ENCODE measurements at regions of chr16 and their contacts with region 1.

Region 1: GRCh38 chr16:27179500-27180072 is 23.7 kb upstream of the KDM8 start:
- DNase-seq: peak; percentile 87
- ATAC-seq: peak; percentile 100
- H3K4me3 ChIP-seq: no peak overlapping the region
- H3K4me3 Mint-ChIP-seq: no peak overlapping the region
- H3K27ac ChIP-seq: no peak overlapping the region
- H3K27ac Mint-ChIP-seq: peak overlapping the region; percentile 10
- H3K4me1 ChIP-seq: peaks cover 16 to 26% of the 10 kb centered on the region in 2 donors
- H3K4me1 Mint-ChIP-seq: peaks cover 17% of the 10 kb centered on the region
- H3K27me3 ChIP-seq: no peaks in the 10 kb centered on the region
- H3K27me3 Mint-ChIP-seq: no peaks in the 10 kb centered on the region
- CTCF ChIP-seq: peak; percentile 84

Region 2: DNA sequence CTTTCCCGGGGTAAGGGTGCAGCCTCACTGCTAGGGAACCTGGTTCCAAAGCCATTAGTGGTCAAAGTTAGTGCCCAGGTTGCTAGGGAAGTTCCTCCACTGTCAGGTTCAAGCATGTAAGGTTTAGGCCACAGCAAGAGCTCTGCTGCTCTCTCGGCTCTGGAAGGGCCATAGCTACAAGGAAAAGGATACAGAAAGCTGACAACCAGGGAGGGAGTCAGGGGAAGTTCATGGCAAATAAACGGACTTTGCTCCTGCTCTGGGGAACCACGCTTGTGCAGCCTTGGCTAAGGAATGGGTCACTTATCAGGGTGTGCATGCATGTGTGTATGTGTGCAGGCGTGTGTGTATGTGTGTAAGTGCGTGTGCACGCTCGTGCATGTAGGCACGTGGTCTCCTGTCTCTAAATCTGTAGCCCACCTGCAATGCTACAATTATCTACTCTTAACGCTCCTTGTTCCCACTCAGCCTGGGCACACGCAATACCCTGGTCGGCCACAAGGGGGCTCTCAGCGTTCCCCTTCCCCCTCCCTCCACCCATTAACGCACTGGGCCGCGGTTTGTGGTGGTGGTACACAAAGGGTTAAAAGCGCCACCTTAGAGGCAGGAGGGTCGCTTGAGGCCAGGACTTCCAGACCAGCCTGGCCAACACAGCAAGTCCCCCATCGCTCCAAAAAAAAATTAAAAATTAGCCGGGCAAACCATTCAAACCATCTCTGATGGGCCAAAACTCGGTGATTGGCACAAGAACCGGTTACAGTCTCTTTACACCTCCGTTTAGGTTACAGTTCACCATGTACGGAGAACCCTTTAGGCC is 24.7 kb before region 1 on chr16:
- CTCF ChIA-PET with region 1: interaction called, 31 read pairs
- POLR2A ChIA-PET with region 1: no interaction called
- intact Hi-C with region 1: no loop called
- DNase-seq: peak; percentile 75
- ATAC-seq: peak; percentile 91
- H3K4me3 ChIP-seq: no peak overlapping the region
- H3K4me3 Mint-ChIP-seq: no peak overlapping the region
- H3K27ac ChIP-seq: no peak overlapping the region
- H3K27ac Mint-ChIP-seq: no peak overlapping the region
- H3K4me1 ChIP-seq: peaks cover 9 to 11% of the 10 kb centered on the region in 2 donors
- H3K4me1 Mint-ChIP-seq: peaks cover 13% of the 10 kb centered on the region
- H3K27me3 ChIP-seq: no peaks in the 10 kb centered on the region
- H3K27me3 Mint-ChIP-seq: no peaks in the 10 kb centered on the region
- CTCF ChIP-seq: peak; percentile 99

Region 3: DNA sequence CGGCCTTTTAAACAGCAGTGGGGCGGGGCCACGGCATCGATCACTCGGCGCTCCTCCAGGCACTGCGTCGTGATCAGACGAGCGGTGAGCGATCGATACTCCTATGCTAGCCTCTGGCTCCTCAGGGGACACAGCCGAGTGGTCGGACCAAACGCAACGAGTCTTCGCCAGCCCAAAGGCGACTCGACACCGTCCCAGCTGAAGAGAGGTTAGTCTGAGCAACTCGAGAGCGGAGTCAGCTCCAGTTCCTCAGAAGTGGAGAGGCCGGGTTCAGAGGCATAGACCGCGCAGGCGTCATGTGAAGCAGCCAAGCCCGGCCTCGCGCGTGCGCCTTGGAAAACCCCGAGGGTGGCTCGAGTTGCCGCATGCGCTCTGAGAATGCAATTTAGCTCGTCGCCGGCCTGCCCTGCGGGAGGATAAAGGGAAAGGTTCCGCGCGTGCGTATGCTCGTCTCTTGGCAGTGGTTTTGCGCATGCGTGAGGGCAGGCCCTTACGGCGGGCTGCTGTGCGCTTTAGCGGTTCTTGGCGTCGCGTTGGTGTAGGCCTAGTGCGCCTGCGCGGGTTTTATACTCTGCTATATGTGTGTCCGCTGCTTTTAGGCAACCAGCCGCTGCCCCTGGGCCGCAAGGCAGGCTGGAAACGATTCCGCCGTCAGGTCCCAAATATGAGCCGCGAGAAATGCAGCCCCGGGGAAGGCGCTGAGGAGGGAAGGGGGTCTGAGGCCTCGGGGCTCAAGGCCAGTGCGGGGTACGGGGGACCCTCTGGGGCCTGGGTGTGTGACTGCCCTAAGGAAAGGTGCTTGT is 24.0 kb after region 1 on chr16 and contains the start of gene KDM8:
- CTCF ChIA-PET with region 1: interaction called, 47 read pairs
- POLR2A ChIA-PET with region 1: interaction called, 4 read pairs
- intact Hi-C with region 1: no loop called
- DNase-seq: peak; percentile 100
- ATAC-seq: peak; percentile 76
- H3K4me3 ChIP-seq: peak within 1 kb of the TSS; percentile 69 to 95 (median 92)
- H3K4me3 Mint-ChIP-seq: peak within 1 kb of the TSS; percentile 97
- H3K27ac ChIP-seq: peak within 1 kb of the TSS; percentile 93 to 94
- H3K27ac Mint-ChIP-seq: peak within 1 kb of the TSS; percentile 100
- H3K4me1 ChIP-seq: peaks cover 50 to 62% of the 10 kb centered on the region in 2 donors
- H3K4me1 Mint-ChIP-seq: peaks cover 67% of the 10 kb centered on the region
- H3K27me3 ChIP-seq: no peaks in the 10 kb centered on the region
- H3K27me3 Mint-ChIP-seq: no peaks in the 10 kb centered on the region
- CTCF ChIP-seq: no peak
- total RNA-seq, gene KDM8: 37.4 and 39.8 TPM in 2 replicates

Region 4: DNA sequence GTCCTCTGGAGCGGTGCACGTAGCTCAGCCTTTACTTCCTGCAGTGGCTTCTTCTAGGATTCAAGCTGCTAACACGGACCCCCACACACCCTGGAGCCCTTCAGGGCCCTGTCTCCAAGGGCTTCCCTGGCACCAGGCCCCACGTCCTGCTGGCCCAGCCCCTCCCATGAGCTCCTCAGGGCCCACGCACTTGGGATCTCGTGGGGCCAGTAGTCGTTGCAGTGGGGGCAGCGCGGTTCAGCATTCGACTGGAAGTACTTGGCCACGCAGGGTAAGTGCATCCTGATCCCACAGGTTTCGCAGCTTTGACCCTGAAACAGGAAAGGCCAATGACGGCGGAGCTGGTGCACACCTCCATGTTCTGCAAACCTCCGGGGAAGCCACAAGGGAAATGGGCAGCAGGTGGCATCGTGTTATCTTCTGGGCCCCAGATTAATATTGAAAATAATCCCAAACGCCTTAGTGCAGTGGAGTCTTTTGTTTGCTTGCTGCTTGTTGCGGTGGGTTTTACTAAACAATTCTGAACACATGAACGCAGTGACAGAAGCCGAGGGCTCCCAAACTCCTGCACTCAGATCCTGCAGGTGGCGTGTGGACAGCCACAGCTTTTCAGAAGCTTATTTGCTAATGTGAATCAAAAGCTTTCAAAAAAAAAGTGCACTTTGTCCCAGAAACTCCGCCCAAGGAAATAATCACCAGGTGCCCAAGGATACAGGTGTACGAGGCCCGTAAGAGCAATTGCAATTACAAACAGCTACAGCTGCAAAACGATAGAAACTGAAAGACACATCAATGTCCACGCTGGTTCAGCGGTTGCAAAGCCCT is 46.2 kb after region 1 on chr16:
- CTCF ChIA-PET with region 1: interaction called, 34 read pairs
- POLR2A ChIA-PET with region 1: interaction called, 9 read pairs
- intact Hi-C with region 1: loop called (anchors 5 kb)
- DNase-seq: no peak
- ATAC-seq: no peak
- H3K4me3 ChIP-seq: no peak overlapping the region
- H3K4me3 Mint-ChIP-seq: peak overlapping the region; percentile 12
- H3K27ac ChIP-seq: no peak overlapping the region
- H3K27ac Mint-ChIP-seq: peak overlapping the region; percentile 75
- H3K4me1 ChIP-seq: peaks cover 37 to 51% of the 10 kb centered on the region in 2 donors
- H3K4me1 Mint-ChIP-seq: peaks cover 42% of the 10 kb centered on the region
- H3K27me3 ChIP-seq: no peaks in the 10 kb centered on the region
- H3K27me3 Mint-ChIP-seq: no peaks in the 10 kb centered on the region
- CTCF ChIP-seq: no peak

Region 5: DNA sequence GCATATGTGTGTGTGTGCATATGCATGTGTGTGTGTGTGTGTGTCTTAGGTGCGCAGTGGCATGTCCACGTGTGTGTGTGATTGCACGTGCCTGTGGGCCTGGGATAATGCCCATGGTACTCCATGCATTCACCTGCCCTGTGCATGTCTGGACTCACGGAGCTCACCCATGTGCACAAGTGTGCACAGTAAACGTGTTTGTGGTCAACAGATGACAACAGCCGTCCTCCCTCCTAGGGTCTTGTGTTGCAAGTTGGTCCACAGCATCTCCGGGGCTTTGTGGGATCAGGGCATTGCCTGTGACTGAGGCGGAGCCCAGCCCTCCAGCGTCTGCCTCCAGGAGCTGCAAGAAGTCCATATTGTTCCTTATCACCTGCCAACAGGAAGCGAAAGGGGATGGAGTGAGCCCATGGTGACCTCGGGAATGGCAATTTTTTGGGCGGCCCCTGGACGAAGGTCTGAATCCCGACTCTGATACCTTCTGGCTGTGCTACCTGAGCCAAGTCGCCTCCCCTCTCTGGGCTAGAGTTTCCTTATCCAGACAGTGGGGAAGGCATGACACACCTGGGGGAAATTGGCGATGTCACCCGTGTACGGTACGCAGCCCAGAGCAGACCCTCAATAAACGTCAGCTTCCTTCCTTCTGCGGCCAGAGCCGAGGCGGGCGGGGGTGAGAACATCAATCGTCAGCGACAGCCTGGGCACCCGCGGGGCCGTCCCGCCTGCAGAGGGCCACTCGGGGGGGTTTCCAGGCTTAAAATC is 270.0 kb after region 1 on chr16:
- CTCF ChIA-PET with region 1: interaction called, 47 read pairs
- POLR2A ChIA-PET with region 1: interaction called, 3 read pairs
- intact Hi-C with region 1: no loop called
- DNase-seq: peak; percentile 93
- ATAC-seq: peak; percentile 77
- H3K4me3 ChIP-seq: peak overlapping the region in 1 of 5 experiments; percentile 17
- H3K4me3 Mint-ChIP-seq: peak overlapping the region; percentile 91
- H3K27ac ChIP-seq: peak overlapping the region; percentile 79 to 82
- H3K27ac Mint-ChIP-seq: peak overlapping the region; percentile 98
- H3K4me1 ChIP-seq: peaks cover 56 to 76% of the 10 kb centered on the region in 2 donors
- H3K4me1 Mint-ChIP-seq: peaks cover 76% of the 10 kb centered on the region
- H3K27me3 ChIP-seq: no peaks in the 10 kb centered on the region
- H3K27me3 Mint-ChIP-seq: no peaks in the 10 kb centered on the region
- CTCF ChIP-seq: no peak

Region 6: GRCh38 chr16:27455700-27456099 is 276.1 kb after region 1 on chr16:
- CTCF ChIA-PET with region 1: interaction called, 47 read pairs
- POLR2A ChIA-PET with region 1: no interaction called
- intact Hi-C with region 1: loop called (anchors 2 kb)
- DNase-seq: peak; percentile 36
- ATAC-seq: no peak
- H3K4me3 ChIP-seq: no peak overlapping the region
- H3K4me3 Mint-ChIP-seq: no peak overlapping the region
- H3K27ac ChIP-seq: peak overlapping the region in 1 of 2 donors; percentile 30
- H3K27ac Mint-ChIP-seq: no peak overlapping the region
- H3K4me1 ChIP-seq: peaks cover 30 to 49% of the 10 kb centered on the region in 2 donors
- H3K4me1 Mint-ChIP-seq: peaks cover 55% of the 10 kb centered on the region
- H3K27me3 ChIP-seq: no peaks in the 10 kb centered on the region
- H3K27me3 Mint-ChIP-seq: no peaks in the 10 kb centered on the region
- CTCF ChIP-seq: no peak

Measured in B cell (primary cell).